ENCODE measurements at regions of chr3 and their contacts with region 1.

Region 1: DNA sequence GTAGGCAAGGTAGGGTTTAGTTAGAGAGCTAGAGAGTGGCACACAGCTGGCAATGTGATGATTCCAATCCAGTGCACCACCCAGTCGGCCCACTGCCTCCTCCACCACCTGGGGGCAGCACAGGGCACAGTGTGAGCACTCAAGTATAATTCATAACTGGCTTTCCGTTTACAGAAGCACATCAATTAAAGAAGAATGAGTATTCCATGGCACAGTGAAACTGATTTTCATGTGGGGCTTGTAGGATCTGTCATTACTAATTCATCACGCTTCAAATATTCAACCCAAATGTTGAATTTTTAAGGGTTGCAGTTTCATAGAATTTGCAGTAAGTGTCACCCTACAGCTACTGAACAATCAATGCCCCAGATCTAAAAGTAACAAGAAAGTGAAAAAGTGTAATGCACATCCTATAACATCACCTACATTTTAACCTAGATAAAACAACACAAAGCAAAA is 149.9 kb downstream of the IGSF11 start:
- DNase-seq: peak; percentile 43
- ATAC-seq: peak; percentile 92
- H3K4me3 ChIP-seq: no peak overlapping the region
- H3K27ac ChIP-seq: no peak overlapping the region
- H3K4me1 ChIP-seq: no peaks in the 10 kb centered on the region
- H3K27me3 ChIP-seq: peaks cover 20% of the 10 kb centered on the region
- CTCF ChIP-seq: peak; percentile 98

Region 2: GRCh38 chr3:118833075-118833474 is 51.7 kb before region 1 on chr3:
- CTCF ChIA-PET with region 1: no interaction called
- POLR2A ChIA-PET with region 1: no interaction called
- in situ Hi-C with region 1: no loop called
- intact Hi-C with region 1: no loop called
- DNase-seq: no peak
- ATAC-seq: no peak
- H3K4me3 ChIP-seq: no peak overlapping the region
- H3K27ac ChIP-seq: no peak overlapping the region
- H3K4me1 ChIP-seq: no peaks in the 10 kb centered on the region
- H3K27me3 ChIP-seq: no peaks in the 10 kb centered on the region
- CTCF ChIP-seq: no peak

Region 3: GRCh38 chr3:119034256-119035013 is 149.7 kb after region 1 on chr3 and contains the start of gene IGSF11:
- CTCF ChIA-PET with region 1: interaction called, 20 read pairs
- POLR2A ChIA-PET with region 1: no interaction called
- in situ Hi-C with region 1: no loop called
- intact Hi-C with region 1: loop called (anchors 2 kb)
- DNase-seq: no peak
- ATAC-seq: peak; percentile 97
- H3K4me3 ChIP-seq: peak within 1 kb of the TSS; percentile 50 to 54
- H3K27ac ChIP-seq: no peak within 1 kb of the TSS
- H3K4me1 ChIP-seq: peaks cover 3% of the 10 kb centered on the region; the same call in 1 of the 2 replicates
- H3K27me3 ChIP-seq: peaks cover 42% of the 10 kb centered on the region
- CTCF ChIP-seq: peak; percentile 97
- total RNA-seq, gene IGSF11: 0.33 TPM

Region 4: GRCh38 chr3:119098619-119099222 is 213.9 kb after region 1 on chr3:
- CTCF ChIA-PET with region 1: interaction called, 36 read pairs
- POLR2A ChIA-PET with region 1: no interaction called
- in situ Hi-C with region 1: no loop called
- intact Hi-C with region 1: loop called (anchors 1 kb)
- DNase-seq: peak; percentile 20
- ATAC-seq: no peak; the same call in 1 of the 2 replicates
- H3K4me3 ChIP-seq: no peak overlapping the region
- H3K27ac ChIP-seq: no peak overlapping the region
- H3K4me1 ChIP-seq: no peaks in the 10 kb centered on the region
- H3K27me3 ChIP-seq: no peaks in the 10 kb centered on the region
- CTCF ChIP-seq: peak; percentile 78; the same call in 1 of the 2 replicates

Region 5: GRCh38 chr3:119240591-119241434 is 356.0 kb after region 1 on chr3 and contains the start of gene B4GALT4:
- CTCF ChIA-PET with region 1: interaction called, 12 read pairs
- POLR2A ChIA-PET with region 1: no interaction called
- in situ Hi-C with region 1: no loop called
- intact Hi-C with region 1: loop called (anchors 1 kb)
- DNase-seq: peak; percentile 25
- ATAC-seq: peak; percentile 96
- H3K4me3 ChIP-seq: peak within 1 kb of the TSS; percentile 85 to 86
- H3K27ac ChIP-seq: peak within 1 kb of the TSS; percentile 93
- H3K4me1 ChIP-seq: peaks cover 21% of the 10 kb centered on the region
- H3K27me3 ChIP-seq: no peaks in the 10 kb centered on the region
- CTCF ChIP-seq: no peak
- total RNA-seq, gene B4GALT4: 27.4 TPM

Region 6: GRCh38 chr3:119562307-119562961 is 677.7 kb after region 1 on chr3:
- CTCF ChIA-PET with region 1: no interaction called
- POLR2A ChIA-PET with region 1: no interaction called
- in situ Hi-C with region 1: no loop called
- intact Hi-C with region 1: loop called (anchors 10 kb)
- DNase-seq: no peak
- ATAC-seq: no peak
- H3K4me3 ChIP-seq: no peak overlapping the region
- H3K27ac ChIP-seq: no peak overlapping the region
- H3K4me1 ChIP-seq: no peaks in the 10 kb centered on the region
- H3K27me3 ChIP-seq: no peaks in the 10 kb centered on the region
- CTCF ChIP-seq: no peak